ENCODE measurements at regions of chr20 and their contacts with region 1.

Region 1: DNA sequence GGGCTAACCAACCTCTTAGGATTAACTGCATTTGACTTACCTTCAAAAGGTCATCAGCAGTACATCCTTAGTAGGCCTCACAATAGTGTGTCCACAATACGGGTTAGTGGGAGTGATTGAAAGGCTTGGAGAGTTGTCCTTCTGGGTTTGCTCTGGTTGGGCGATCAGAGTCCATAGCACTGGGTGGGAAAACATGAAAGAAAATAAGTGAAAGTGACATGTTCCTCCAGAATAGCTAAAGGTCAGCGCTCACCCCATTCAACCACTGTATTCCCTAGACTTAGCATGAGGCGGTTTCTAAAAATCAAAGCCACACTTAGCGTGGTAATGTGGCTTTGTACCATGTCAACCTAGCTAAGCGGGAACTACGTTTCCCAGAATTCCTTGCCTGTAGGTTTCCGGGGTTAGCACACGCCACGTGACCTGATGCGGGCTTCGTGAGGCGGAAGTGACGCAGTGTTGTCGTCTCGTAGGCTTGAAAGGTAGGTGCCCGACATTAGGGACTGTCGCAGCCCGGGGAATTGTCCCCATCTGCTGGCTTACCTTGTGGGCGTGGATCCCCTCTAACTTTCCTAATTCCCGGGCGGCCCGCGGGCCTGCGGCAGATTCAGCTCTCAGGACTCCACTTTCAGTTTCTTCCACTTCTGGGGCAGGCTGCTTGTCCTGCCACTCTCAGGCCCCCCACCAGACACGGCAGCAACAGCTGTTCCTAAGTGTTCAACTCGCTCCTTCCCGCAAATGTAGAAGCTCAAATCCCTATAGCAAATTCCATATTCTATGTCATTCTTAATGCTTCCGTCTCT is 19.8 kb upstream of the SCP2D1 start:
- DNase-seq: peak; percentile 90 to 91
- H3K4me3 ChIP-seq: peak overlapping the region; percentile 11 to 72 (median 52)
- H3K27ac ChIP-seq: peak overlapping the region; percentile 69 to 93 (median 70)
- H3K4me1 ChIP-seq: no peaks in the 10 kb centered on the region
- H3K27me3 ChIP-seq: no peaks in the 10 kb centered on the region
- CTCF ChIP-seq: peak in 4 of 6 experiments; percentile 6 to 26 (median 18)
- POLR2A ChIP-seq: peak in 1 of 2 donors; percentile 79

Region 2: GRCh38 chr20:18571578-18571977 is 222.2 kb before region 1 on chr20:
- intact Hi-C with region 1: loop called (anchors 10 kb)
- DNase-seq: no peak
- H3K4me3 ChIP-seq: no peak overlapping the region
- H3K27ac ChIP-seq: no peak overlapping the region
- H3K4me1 ChIP-seq: peaks cover 5 to 9% of the 10 kb centered on the region in 2 donors
- H3K27me3 ChIP-seq: no peaks in the 10 kb centered on the region
- CTCF ChIP-seq: no peak
- POLR2A ChIP-seq: no peak

Region 3: GRCh38 chr20:18628330-18628920 is 165.4 kb before region 1 on chr20:
- intact Hi-C with region 1: loop called (anchors 10 kb)
- DNase-seq: peak; percentile 34 to 45
- H3K4me3 ChIP-seq: no peak overlapping the region
- H3K27ac ChIP-seq: no peak overlapping the region
- H3K4me1 ChIP-seq: no peaks in the 10 kb centered on the region
- H3K27me3 ChIP-seq: no peaks in the 10 kb centered on the region
- CTCF ChIP-seq: peak in 5 of 6 experiments; percentile 35 to 67 (median 52)
- POLR2A ChIP-seq: no peak

Measured in thyroid gland (tissue), 4 donors.